RWPE1 (cell line): ENCODE measurements at regions of chr2 and their contacts with region 1.

Region 1: GRCh38 chr2:12486205-12487118 is 230.3 kb upstream of the TRIB2 start:
- DNase-seq: peak; percentile 81
- H3K27ac ChIP-seq: peak overlapping the region; percentile 69
- CTCF ChIP-seq: no peak

Region 2: DNA sequence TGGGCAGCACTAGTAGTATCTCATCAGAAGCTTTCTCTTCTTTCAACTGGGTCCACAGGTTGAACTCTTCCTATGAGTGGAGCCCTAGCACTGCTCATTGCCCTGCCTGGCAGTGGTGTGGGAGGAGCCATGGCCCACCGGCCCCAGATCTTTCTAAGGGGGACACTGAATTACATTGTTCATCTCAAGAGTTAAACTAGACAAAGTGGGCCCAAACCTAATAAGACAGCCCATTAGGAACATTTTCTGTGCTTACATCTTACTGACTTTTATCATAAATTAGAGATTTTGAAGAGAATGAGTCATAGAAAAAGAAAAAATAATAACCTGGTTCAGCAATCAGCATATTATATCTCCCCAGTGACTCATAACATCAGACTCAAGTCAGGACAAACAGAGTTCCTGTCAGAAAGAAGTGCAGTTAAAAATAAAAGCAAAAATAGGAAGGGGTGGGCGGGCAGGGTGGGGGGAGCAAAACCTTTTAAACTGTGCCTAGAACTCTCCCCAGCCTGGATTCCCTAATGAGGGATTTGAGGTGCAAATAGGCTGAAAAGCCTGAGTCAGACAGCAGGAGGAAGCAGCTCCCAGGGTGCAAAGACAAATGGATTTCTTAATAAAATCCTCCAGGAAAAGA is 68.7 kb after region 1 on chr2:
- CTCF ChIA-PET with region 1: no interaction called
- POLR2A ChIA-PET with region 1: interaction called, 10 read pairs
- DNase-seq: peak; percentile 80
- H3K27ac ChIP-seq: peak overlapping the region; percentile 79
- CTCF ChIP-seq: no peak

Region 3: GRCh38 chr2:12649602-12650400 is 163.3 kb after region 1 on chr2:
- CTCF ChIA-PET with region 1: no interaction called
- POLR2A ChIA-PET with region 1: no interaction called
- DNase-seq: no peak
- H3K27ac ChIP-seq: no peak overlapping the region
- CTCF ChIP-seq: no peak